ENCODE measurements at regions of chr20 and their contacts with region 1.

Region 1: GRCh38 chr20:645318-646106 is 7.5 kb downstream of the SRXN1 start:
- DNase-seq: peak; percentile 92
- ATAC-seq: peak; percentile 86
- H3K4me3 Mint-ChIP-seq: no peak overlapping the region
- H3K27ac Mint-ChIP-seq: peak overlapping the region; percentile 45
- H3K4me1 Mint-ChIP-seq: peaks cover 15% of the 10 kb centered on the region
- H3K27me3 Mint-ChIP-seq: no peaks in the 10 kb centered on the region; the same call in 1 of the 2 replicates
- CTCF ChIP-seq: peak; percentile 97

Region 2: GRCh38 chr20:527571-527886 is 118.0 kb before region 1 on chr20:
- CTCF ChIA-PET with region 1: no interaction called
- POLR2A ChIA-PET with region 1: no interaction called
- DNase-seq: no peak
- ATAC-seq: no peak
- H3K4me3 Mint-ChIP-seq: no peak overlapping the region
- H3K27ac Mint-ChIP-seq: peak overlapping the region; percentile 36; the same call in 1 of the 2 replicates
- H3K4me1 Mint-ChIP-seq: peaks cover 15% of the 10 kb centered on the region
- H3K27me3 Mint-ChIP-seq: no peaks in the 10 kb centered on the region
- CTCF ChIP-seq: no peak

Region 3: DNA sequence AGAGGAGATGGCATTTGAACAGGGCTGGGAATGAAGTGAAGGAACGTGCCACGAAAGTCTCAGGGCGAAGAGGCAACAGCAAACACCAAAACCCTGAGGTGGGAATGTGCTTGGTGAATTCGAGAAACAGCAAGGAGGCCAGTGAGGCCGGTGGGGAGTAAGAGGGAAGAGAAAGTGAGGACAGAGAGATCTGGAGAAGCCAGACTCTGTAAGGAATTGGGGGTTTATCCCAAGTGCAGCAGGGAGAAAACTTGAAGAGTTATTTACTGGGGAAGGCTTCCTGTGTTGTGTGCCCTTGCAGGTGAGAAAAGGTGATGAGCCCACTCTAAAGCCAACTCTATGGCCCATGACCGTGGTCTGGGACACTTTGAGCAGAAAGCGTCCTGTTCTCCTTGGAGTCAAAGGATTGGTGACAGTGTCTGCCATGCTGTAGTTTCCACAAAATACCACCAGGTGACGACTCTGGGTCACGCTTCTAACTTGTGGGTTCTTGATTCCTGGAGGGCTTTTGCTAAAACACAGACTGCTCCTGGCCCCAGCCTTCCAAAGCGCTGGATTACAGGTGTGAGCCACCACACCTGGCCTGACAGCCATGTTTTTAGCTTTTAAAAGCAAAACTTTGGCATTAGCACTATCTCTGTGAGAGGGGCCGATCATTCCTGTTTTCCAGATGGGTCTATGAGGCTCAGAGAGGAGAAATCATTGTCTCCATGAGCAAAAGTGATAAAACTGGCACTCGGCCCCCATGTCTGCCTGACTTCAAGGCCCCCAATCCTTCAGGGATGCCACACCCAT is 83.9 kb before region 1 on chr20:
- CTCF ChIA-PET with region 1: interaction called, 58 read pairs
- POLR2A ChIA-PET with region 1: interaction called, 4 read pairs
- DNase-seq: peak; percentile 83
- ATAC-seq: peak; percentile 96
- H3K4me3 Mint-ChIP-seq: no peak overlapping the region
- H3K27ac Mint-ChIP-seq: no peak overlapping the region
- H3K4me1 Mint-ChIP-seq: no peaks in the 10 kb centered on the region
- H3K27me3 Mint-ChIP-seq: no peaks in the 10 kb centered on the region
- CTCF ChIP-seq: peak; percentile 88

Region 4: DNA sequence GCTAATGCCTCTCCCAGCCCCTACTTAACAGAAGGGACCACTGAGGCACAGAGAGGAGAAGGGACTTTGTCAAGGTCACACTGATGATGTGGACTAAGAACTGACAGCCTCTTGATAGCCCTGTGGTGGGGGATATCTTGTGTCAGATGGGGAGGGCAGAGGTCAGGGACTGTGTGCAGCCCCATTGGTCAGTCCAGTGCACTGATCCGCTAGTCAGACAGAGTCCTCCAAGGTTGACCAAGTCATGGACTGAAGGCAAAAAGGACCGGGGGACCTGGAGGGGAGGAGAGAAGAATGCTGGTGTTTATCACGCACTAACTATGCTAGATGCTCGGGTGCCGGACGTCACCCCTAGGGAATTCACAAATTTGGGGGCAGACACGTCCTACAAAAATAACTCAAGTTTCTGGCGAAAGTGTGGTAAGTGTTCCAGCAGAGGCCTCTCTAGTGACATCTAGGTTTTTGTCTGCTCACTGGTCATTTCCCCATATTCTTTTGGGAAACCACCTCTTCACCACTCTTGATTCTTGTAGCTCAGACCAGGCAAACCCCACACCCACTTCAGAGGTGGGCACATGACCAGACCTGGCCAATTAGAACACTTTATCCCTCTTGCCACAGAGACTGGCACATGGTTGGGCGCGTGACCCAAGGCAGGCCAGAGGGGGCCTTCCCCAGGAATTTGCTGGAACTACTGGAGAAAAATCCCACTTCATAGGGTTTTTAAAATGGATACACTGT is 56.4 kb before region 1 on chr20:
- CTCF ChIA-PET with region 1: interaction called, 14 read pairs
- POLR2A ChIA-PET with region 1: no interaction called
- DNase-seq: no peak
- ATAC-seq: peak; percentile 95
- H3K4me3 Mint-ChIP-seq: no peak overlapping the region
- H3K27ac Mint-ChIP-seq: no peak overlapping the region
- H3K4me1 Mint-ChIP-seq: no peaks in the 10 kb centered on the region
- H3K27me3 Mint-ChIP-seq: peaks cover 5% of the 10 kb centered on the region; the same call in 1 of the 2 replicates
- CTCF ChIP-seq: no peak

Region 5: DNA sequence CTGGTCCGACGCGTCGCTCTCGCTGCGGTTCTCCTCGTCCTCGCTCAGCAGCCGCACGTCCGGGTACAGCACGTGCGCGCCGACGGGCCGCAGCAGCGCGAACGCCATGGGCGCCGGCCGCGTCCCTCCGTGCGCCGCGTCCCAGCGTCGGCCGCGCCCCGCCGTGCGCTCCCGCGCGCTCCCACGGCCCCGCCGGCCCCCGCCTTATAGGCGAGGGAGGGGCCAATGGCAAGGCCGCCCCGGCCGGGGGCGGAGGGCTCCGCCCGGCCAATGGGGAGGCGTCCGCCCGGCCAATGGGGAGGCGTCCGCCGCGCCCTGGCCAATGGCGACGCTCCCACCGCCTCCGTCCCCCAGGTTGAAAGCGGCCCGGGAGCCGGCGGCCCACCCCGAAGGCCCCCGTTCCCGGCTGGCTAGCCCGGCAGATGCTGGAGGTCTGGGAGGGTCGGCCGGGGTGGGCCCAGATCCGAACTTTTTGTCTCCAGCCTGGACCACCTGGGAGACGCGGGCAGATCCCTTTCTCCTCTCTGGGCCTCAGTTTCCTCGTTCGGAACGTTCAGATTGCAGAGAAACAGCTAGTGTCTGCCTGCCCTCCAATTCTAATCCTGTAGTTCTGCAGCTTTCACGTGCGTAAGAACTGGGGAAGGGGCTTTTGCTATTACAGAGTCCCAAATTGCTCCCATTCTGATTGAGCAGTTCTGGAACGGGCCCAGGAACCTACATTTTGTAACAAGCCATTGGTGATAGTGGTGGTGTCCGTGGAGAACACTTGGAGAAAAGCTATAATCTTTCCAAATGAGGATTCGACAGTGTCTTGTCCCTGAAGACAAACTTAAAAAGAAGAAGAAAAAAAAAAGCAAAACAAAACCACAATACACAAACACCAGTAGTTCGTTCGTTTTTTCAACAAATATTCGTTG is 35.1 kb before region 1 on chr20 and contains the start of gene TCF15:
- CTCF ChIA-PET with region 1: interaction called, 28 read pairs
- POLR2A ChIA-PET with region 1: no interaction called
- DNase-seq: peak; percentile 73
- ATAC-seq: peak; percentile 92
- H3K4me3 Mint-ChIP-seq: peak within 1 kb of the TSS; percentile 62
- H3K27ac Mint-ChIP-seq: no peak within 1 kb of the TSS
- H3K4me1 Mint-ChIP-seq: peaks cover 13% of the 10 kb centered on the region
- H3K27me3 Mint-ChIP-seq: peaks cover 51% of the 10 kb centered on the region
- CTCF ChIP-seq: no peak
- total RNA-seq, gene TCF15: 3.8 to 5.8 TPM (median 4.6 TPM) in 3 replicates

Region 6: DNA sequence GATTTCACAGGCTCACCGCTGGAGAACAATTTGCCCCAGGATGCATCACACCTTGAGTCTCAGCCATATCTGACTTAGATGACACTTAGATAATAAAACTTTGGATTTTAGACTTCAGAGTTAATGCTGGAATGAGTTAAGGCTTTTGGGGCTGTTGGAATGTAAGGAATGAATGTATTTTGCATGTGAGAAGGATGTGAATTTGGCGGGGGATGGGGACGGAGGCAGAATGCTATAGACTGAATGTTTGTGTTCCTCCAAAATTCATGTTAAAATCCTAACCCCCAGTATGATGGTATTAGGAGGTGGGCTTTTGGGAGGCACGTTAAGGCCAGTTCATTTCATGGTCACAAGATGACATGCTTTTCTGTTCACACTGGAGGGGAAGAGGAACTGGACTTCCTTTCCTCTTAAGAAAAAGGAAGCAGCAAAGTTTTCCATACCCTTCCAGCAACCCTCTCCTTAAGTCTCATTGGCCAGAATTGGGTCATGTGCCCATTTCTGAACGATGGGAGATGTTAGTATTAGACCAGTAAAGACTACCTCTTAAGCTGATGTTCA is 13.3 kb after region 1 on chr20:
- CTCF ChIA-PET with region 1: interaction called, 136 read pairs
- POLR2A ChIA-PET with region 1: interaction called, 4 read pairs
- DNase-seq: peak; percentile 33
- ATAC-seq: peak; percentile 41
- H3K4me3 Mint-ChIP-seq: peak overlapping the region; percentile 17; the same call in 1 of the 2 replicates
- H3K27ac Mint-ChIP-seq: peak overlapping the region; percentile 85
- H3K4me1 Mint-ChIP-seq: peaks cover 79% of the 10 kb centered on the region
- H3K27me3 Mint-ChIP-seq: peaks cover 37% of the 10 kb centered on the region
- CTCF ChIP-seq: no peak

Region 7: DNA sequence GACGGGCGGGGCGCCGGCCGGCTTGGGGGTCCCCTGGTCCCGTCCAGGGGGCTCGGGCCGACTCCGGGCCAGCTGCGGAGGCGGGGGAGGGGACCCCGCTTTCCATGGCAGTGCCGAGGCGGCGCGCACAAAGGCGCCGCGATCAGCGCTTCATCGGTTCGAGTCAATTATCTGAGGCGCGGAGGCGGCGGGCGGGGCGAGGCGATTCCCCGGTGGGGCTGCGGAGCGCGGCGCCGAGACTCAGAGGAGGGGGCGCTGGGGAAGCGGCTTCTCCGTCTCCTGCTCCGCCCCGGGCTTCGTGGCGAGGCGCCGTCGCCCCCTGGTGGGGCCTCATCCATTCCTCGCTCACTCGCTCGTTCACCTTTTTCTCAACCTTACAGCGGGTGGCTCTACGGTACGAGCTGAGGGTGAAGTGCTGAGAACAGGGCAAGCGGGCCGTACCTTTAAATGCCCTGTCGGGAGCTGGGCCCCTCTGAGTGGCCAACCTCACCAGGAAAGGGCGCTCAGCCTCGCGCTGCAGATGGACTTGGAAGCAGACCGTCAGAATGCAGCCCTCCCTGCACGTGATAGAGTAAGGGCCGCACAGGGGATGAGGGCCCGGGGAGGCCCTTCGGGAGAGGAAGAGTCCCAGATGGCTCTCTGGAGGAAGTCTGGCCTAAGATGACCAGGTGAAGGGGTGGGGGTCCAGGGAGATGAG is 82.9 kb after region 1 on chr20:
- CTCF ChIA-PET with region 1: interaction called, 15 read pairs
- POLR2A ChIA-PET with region 1: no interaction called
- DNase-seq: peak; percentile 88
- ATAC-seq: peak; percentile 89
- H3K4me3 Mint-ChIP-seq: peak overlapping the region; percentile 64
- H3K27ac Mint-ChIP-seq: no peak overlapping the region
- H3K4me1 Mint-ChIP-seq: peaks cover 6% of the 10 kb centered on the region; the same call in 1 of the 2 replicates
- H3K27me3 Mint-ChIP-seq: peaks cover 39% of the 10 kb centered on the region
- CTCF ChIP-seq: peak; percentile 34; the same call in 1 of the 2 replicates

Region 8: DNA sequence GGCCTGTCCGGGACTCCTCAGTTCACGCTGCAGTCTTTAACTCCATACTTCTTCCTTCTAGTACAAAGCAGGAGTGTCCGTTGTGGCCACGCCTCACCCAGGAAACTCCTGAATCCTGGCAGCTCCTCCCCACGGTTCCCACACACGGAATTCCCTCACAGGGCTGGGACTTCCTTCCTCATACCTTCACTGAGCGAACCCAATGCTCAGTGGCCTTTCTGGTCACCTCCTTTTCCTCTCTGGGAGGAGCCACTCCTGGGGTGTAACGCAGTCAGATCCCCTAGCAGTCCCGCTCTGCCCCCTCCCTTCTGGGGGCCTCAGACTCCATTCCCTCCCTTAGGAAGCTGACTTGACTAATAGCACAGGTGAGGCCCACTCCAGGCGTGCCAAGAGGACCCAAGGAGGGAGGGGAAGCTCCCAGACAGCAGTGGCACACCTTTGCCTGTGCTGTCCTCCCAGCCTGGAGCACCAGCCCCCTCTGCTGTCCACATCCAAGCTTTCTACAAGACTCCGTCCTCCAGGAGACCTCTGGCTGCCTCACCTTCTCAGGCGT is 123.0 kb after region 1 on chr20 and contains the start of gene SLC52A3:
- CTCF ChIA-PET with region 1: interaction called, 14 read pairs
- POLR2A ChIA-PET with region 1: no interaction called
- DNase-seq: peak; percentile 73
- ATAC-seq: peak; percentile 96
- H3K4me3 Mint-ChIP-seq: no peak within 1 kb of the TSS
- H3K27ac Mint-ChIP-seq: no peak within 1 kb of the TSS
- H3K4me1 Mint-ChIP-seq: peaks cover 14% of the 10 kb centered on the region
- H3K27me3 Mint-ChIP-seq: no peaks in the 10 kb centered on the region
- CTCF ChIP-seq: no peak
- total RNA-seq, gene SLC52A3: 6.9 to 7.7 TPM (median 7.3 TPM) in 3 replicates